ENCODE measurements at regions of chr10 and their contacts with region 1.

Region 1: DNA sequence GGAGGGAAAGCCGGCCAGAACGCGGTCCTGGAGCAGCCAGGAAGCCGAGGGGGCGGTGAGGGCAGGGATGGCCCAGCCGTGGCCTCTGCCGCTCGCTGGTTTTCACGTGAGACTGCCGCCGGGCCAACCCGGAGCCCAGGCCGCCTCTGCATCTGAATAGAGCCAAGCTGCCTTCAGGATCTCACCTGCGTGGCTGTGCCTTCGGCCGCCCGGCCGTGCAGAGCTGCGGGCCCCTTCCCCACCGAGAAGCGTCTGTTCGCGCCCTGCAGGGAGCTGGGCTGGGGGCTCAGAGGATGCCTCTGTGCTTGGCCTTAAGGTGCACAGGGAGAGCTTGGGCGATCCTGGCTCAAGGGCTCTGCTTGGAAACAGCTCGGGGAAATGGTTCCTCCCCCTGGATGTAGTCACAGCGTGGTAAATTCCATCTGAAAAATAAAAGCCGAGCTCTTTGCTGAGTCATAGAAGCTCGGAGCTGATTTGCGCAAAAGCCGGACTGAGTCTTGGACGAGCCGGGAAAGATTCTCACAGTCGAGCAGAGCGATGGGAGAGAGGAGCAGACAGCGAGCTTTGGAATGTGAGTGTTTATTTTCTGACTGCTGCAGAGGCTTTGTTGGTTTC is at the start of gene JAKMIP3:
- DNase-seq: peak; percentile 89
- H3K4me3 ChIP-seq: peak within 1 kb of the TSS; percentile 26 to 57 (median 48)
- H3K27ac ChIP-seq: peak within 1 kb of the TSS; percentile 79 to 93 (median 86)
- H3K4me1 ChIP-seq: peaks cover 0 to 28% (median 21%) of the 10 kb centered on the region in 4 donors
- H3K27me3 ChIP-seq: no peaks in the 10 kb centered on the region
- CTCF ChIP-seq: no peak
- EP300 ChIP-seq: no peak
- POLR2A ChIP-seq: no peak
- total RNA-seq, gene JAKMIP3: 0.49 to 3.0 (median 0.97) TPM

Region 2: GRCh38 chr10:132036887-132037675 is 28.5 kb before region 1 on chr10:
- intact Hi-C with region 1: loop called (anchors 2 kb)
- DNase-seq: no peak
- H3K4me3 ChIP-seq: peak overlapping the region in 3 of 4 donors; percentile 41 to 68 (median 58)
- H3K27ac ChIP-seq: peak overlapping the region in 2 of 4 donors; percentile 29 to 65
- H3K4me1 ChIP-seq: peaks cover 0 to 22% (median 14%) of the 10 kb centered on the region in 4 donors
- H3K27me3 ChIP-seq: peaks cover 2 to 46% (median 15%) of the 10 kb centered on the region in 3 donors
- CTCF ChIP-seq: no peak
- EP300 ChIP-seq: no peak
- POLR2A ChIP-seq: no peak

Measured in sigmoid colon (tissue), 7 donors.